Activated CD8-positive, alpha-beta T cell treated with anti-CD3 and anti-CD28 coated beads for 36 hours (primary cell): ENCODE measurements at regions of chr22 and their contacts with region 1.

Region 1: DNA sequence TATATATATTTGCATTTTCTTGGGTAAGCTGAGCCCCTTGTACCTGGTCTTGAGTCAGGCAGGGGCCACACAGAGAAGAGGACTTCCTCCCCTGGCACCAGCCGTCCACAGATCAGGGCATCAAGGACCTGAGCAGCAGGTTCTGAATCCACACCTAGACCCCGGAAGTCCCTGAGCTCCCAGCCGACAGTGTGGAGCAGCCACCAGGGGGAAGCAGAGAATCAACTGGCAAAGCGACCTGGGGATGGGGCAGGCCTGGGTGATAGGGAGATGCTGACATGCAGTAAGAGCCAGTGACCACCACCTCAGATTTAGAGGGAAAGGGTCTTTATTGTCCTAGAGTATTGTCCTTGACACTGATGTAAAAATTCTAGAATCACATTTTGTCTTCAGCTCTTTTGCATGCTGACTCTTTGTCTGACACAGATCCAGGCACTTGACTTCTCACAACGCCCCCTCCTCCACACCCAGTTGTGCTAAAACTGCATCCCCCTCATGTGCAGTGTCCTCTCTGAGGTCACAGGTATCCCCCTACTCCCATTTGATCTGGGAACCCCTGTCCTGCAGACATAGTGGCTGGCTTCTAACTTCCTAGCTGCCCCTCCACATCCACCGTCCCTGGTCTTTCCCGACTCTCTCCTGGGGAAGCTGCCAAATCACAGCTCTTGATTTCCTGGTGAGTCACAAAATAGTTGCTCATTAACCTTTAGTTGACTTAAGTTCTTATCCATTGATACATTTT is 109.3 kb downstream of the GGTLC2 start:
- DNase-seq: peak; percentile 89
- ATAC-seq: peak; percentile 98
- H3K4me3 Mint-ChIP-seq: no peak overlapping the region
- H3K27ac Mint-ChIP-seq: peak overlapping the region; percentile 81
- H3K4me1 Mint-ChIP-seq: peaks cover 51% of the 10 kb centered on the region
- H3K27me3 Mint-ChIP-seq: no peaks in the 10 kb centered on the region
- CTCF ChIP-seq: peak; percentile 92

Region 2: DNA sequence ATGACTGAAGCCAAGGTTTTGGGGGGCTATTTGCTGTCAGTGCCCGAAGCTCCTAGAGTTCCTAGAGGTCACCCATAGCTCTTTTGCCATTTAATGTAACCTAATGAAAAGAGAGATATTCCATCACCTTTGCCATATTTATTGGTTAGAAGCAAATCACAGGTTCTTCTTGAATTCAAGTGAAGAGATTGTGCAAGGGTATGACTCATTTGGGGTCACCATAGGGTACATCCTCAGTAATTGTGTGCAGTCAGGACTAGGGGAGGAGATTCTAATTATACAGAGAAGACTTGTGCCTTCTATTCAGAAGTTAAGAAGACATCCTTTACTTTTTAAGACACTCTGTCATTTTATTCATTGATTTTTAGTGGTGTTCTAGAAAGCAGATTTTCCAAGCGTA is 187.7 kb before region 1 on chr22:
- CTCF ChIA-PET with region 1: no interaction called
- POLR2A ChIA-PET with region 1: no interaction called
- intact Hi-C with region 1: no loop called
- DNase-seq: no peak
- ATAC-seq: no peak
- H3K4me3 Mint-ChIP-seq: no peak overlapping the region
- H3K27ac Mint-ChIP-seq: no peak overlapping the region
- H3K4me1 Mint-ChIP-seq: no peaks in the 10 kb centered on the region
- H3K27me3 Mint-ChIP-seq: peaks cover 18% of the 10 kb centered on the region
- CTCF ChIP-seq: no peak

Region 3: DNA sequence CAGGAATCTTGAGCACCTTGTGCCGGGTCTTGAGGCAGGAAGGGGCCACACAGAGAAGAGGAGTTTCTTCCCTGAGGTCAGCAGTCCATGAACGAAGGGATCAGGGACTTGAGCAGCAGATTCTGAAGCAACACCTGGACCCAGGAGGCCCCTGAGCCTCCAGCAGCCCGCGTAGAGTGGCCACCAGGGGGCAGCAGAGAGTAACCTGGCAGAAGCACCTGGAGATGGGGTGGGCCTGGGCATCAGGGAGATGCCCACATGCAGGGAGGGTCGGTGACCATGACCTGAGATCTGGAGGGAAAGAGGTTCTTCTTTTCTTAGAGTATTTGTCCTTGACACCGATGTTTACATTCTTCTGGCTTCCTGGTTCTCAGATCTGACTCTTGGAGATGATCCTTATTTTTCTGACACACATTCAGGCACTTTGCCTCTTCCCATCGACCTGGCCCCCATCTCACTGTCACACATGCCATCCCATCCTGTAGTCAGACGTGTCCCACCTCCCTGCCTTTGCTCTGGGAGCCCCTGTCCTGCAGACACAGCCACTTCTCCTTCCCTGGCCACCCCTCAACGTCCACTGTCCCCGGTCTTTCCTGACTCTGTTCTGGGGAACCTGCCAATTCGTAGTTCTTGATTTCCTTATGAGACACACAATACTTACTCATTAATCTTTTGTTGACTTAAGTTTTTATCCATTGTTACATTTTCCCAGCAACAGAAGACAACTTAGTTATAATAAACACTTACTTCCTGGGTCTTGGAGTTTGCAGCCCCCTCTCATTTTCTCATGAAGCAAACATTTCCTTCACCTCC is 42.8 kb before region 1 on chr22:
- CTCF ChIA-PET with region 1: interaction called, 29 read pairs
- POLR2A ChIA-PET with region 1: interaction called, 3 read pairs
- intact Hi-C with region 1: loop called (anchors 2 kb)
- DNase-seq: peak; percentile 85
- ATAC-seq: peak; percentile 85
- H3K4me3 Mint-ChIP-seq: no peak overlapping the region
- H3K27ac Mint-ChIP-seq: no peak overlapping the region
- H3K4me1 Mint-ChIP-seq: no peaks in the 10 kb centered on the region
- H3K27me3 Mint-ChIP-seq: no peaks in the 10 kb centered on the region
- CTCF ChIP-seq: peak; percentile 97

Region 4: GRCh38 chr22:22770280-22770871 is 16.7 kb after region 1 on chr22:
- CTCF ChIA-PET with region 1: interaction called, 110 read pairs
- POLR2A ChIA-PET with region 1: interaction called, 3 read pairs
- intact Hi-C with region 1: no loop called
- DNase-seq: peak; percentile 65
- ATAC-seq: peak; percentile 62
- H3K4me3 Mint-ChIP-seq: no peak overlapping the region
- H3K27ac Mint-ChIP-seq: no peak overlapping the region
- H3K4me1 Mint-ChIP-seq: peaks cover 4% of the 10 kb centered on the region
- H3K27me3 Mint-ChIP-seq: no peaks in the 10 kb centered on the region
- CTCF ChIP-seq: peak; percentile 80

Region 5: DNA sequence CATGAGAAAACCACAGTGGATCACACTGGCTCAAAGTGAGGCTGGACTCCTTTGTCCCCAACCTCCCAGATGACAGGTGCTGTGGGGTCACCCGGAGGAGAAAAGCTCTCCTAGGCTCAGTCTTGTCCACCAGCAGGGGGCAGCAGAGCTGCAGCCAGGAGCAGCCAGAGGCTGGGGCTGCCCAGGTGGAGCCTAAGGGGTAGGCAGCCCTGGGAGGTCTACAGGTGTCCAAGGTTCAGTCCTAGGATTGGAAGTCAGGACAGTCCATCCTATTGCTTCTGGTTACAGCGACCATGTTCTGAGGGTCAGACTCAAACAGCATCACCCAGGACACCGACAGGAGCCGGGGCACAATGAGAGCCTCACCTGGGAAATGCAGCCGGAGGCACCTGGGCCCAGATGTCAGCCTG is 56.3 kb after region 1 on chr22:
- CTCF ChIA-PET with region 1: interaction called, 16 read pairs
- POLR2A ChIA-PET with region 1: no interaction called
- intact Hi-C with region 1: no loop called
- DNase-seq: peak; percentile 72
- ATAC-seq: peak; percentile 78
- H3K4me3 Mint-ChIP-seq: no peak overlapping the region
- H3K27ac Mint-ChIP-seq: no peak overlapping the region
- H3K4me1 Mint-ChIP-seq: peaks cover 25% of the 10 kb centered on the region
- H3K27me3 Mint-ChIP-seq: no peaks in the 10 kb centered on the region
- CTCF ChIP-seq: peak; percentile 72

Region 6: GRCh38 chr22:22928666-22929380 is 175.1 kb after region 1 on chr22:
- CTCF ChIA-PET with region 1: no interaction called
- POLR2A ChIA-PET with region 1: no interaction called
- intact Hi-C with region 1: no loop called
- DNase-seq: peak; percentile 81
- ATAC-seq: peak; percentile 99
- H3K4me3 Mint-ChIP-seq: no peak overlapping the region
- H3K27ac Mint-ChIP-seq: peak overlapping the region; percentile 25
- H3K4me1 Mint-ChIP-seq: peaks cover 21% of the 10 kb centered on the region
- H3K27me3 Mint-ChIP-seq: no peaks in the 10 kb centered on the region
- CTCF ChIP-seq: no peak